Left ventricle myocardium superior (tissue), 1 donor: ENCODE measurements at regions of chr2 and their contacts with region 1.

Region 1: GRCh38 chr2:24228470-24228869 is 53.6 kb downstream of the FAM228A start:
- DNase-seq: no peak
- ATAC-seq: no peak

Region 2: GRCh38 chr2:24382363-24383073 is 154.0 kb after region 1 on chr2:
- intact Hi-C with region 1: loop called (anchors 10 kb)
- DNase-seq: peak; percentile 59
- ATAC-seq: peak; percentile 91